Motor neuron (in vitro differentiated cells): ENCODE measurements at regions of chr19 and their contacts with region 1.

Region 1: GRCh38 chr19:28466107-28467045 is 746.6 kb downstream of the UQCRFS1 start:
- ATAC-seq: peak in 7 of 8 experiments; percentile 21 to 78 (median 44)
- H3K4me3 ChIP-seq: no peak overlapping the region
- H3K27ac ChIP-seq: no peak overlapping the region
- H3K4me1 ChIP-seq: peaks cover 17 to 22% of the 10 kb centered on the region in 2 donors

Region 2: GRCh38 chr19:28152195-28152594 is 314.2 kb before region 1 on chr19:
- in situ Hi-C with region 1: no loop called
- ATAC-seq: peak in 4 of 8 experiments; percentile 50 to 74 (median 56)
- H3K4me3 ChIP-seq: no peak overlapping the region
- H3K27ac ChIP-seq: no peak overlapping the region
- H3K4me1 ChIP-seq: no peaks in the 10 kb centered on the region

Region 3: DNA sequence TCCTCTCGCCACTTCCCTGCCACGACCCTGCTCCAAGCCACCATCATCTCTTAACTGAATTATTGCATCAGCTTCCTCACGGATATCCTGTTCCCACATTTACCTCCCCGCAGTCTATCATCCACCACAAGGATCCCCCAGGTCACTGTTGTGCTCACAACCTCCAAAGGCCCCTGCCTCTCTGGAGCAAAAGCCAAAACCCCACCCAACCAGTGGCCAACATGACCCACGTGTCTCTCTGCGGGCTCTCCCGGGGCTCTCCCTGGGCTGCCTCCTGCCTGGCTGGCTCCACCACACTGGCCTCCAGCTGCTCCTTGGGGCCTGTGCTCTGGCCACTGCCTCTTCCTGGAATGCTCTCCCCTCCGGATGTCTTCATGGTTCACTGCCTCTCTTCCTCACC is 62.7 kb before region 1 on chr19:
- in situ Hi-C with region 1: no loop called
- ATAC-seq: peak in 1 of 8 experiments; percentile 13
- H3K4me3 ChIP-seq: no peak overlapping the region
- H3K27ac ChIP-seq: peak overlapping the region in 1 of 2 donors; percentile 29
- H3K4me1 ChIP-seq: peaks cover 46 to 58% of the 10 kb centered on the region in 2 donors

Region 4: GRCh38 chr19:28606269-28607032 is 140.1 kb after region 1 on chr19:
- in situ Hi-C with region 1: loop called in 2 of 9 experiments (anchors 10 to 25 kb)
- ATAC-seq: no peak
- H3K4me3 ChIP-seq: no peak overlapping the region
- H3K27ac ChIP-seq: no peak overlapping the region
- H3K4me1 ChIP-seq: no peaks in the 10 kb centered on the region

Region 5: DNA sequence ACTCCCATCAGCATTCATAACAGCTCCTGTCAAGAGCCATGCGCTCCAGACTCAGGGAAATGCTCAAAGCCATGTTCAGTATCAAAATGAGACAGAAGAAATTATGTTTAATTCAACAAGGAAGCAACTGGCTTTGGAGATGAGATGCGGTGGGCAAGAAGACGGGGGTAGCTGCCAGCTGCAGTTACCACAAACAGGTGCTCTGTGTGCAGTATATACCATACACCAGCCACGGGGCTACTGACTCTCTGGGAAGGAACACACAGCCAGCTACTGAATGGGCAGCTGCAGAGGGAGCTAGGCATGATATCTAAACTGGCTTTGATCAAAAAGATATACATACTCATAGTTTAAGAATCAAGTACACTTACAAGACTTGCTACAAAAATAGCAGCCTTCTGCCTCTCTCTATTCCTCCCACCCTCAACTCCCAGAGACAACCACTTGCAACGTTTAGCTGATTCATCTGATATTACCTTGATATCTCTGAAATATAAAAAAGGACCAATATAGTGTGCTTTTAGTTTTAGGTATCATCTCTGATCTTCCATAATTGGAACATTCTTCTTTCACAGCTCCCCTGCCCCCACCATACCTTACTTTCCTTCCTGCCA is 153.5 kb after region 1 on chr19:
- in situ Hi-C with region 1: loop called in 2 of 9 experiments (anchors 10 to 25 kb)
- ATAC-seq: no peak
- H3K4me3 ChIP-seq: no peak overlapping the region
- H3K27ac ChIP-seq: no peak overlapping the region
- H3K4me1 ChIP-seq: no peaks in the 10 kb centered on the region

Region 6: GRCh38 chr19:29596885-29597525 is 1130.6 kb after region 1 on chr19:
- in situ Hi-C with region 1: loop called in 1 of 9 experiments (anchors 25 kb)
- ATAC-seq: peak; percentile 44 to 68 (median 60)
- H3K4me3 ChIP-seq: no peak overlapping the region
- H3K27ac ChIP-seq: peak overlapping the region; percentile 54 to 56
- H3K4me1 ChIP-seq: peaks cover 29 to 30% of the 10 kb centered on the region in 2 donors